HCT116 (cell line): ENCODE measurements at regions of chr17 and their contacts with region 1.

Region 1: GRCh38 chr17:27879987-27880608 is 13.1 kb downstream of the LYRM9 start:
- DNase-seq: no peak
- ATAC-seq: peak; percentile 99
- H3K4me3 ChIP-seq: no peak overlapping the region
- H3K27ac ChIP-seq: no peak overlapping the region
- H3K4me1 ChIP-seq: no peaks in the 10 kb centered on the region
- H3K27me3 ChIP-seq: no peaks in the 10 kb centered on the region
- CTCF ChIP-seq: peak; percentile 83 to 92 (median 85)
- POLR2A ChIP-seq: no peak
- RAD21 ChIP-seq: peak; percentile 88

Region 2: DNA sequence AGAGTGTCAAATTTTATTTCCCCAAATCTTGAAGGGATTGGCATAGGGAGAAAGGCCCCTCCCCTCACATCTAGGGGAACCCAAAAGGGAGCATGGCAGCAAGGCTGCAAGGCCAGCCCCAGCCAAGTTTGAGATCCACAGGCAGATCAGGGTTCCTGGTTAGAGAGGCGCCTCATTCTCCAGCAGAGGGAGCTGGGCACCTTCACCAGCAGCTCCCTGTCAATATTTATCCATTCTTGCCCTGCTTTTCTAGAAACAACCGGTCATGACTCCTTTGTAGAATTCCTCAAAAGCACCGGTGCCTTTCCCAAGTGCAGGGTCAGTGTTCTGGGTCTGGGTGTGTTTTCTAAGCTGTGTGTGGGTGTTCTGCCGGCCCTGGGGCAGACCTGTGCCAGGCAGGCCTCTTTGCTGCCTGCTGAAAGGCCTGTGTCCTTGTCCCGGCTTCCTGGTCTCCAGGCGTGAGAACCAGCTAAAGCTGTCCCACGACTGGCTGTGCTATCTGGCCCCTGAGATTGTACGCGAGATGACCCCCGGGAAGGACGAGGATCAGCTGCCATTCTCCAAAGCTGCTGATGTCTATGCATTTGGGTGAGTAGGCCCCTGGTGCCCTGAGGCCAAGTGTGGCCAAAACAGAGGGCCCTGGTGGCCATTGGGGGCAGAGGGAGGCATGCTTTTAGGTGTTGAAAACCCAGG is 270.3 kb before region 1 on chr17:
- CTCF ChIA-PET with region 1: no interaction called
- POLR2A ChIA-PET with region 1: no interaction called
- RAD21 ChIA-PET with region 1: no interaction called
- intact Hi-C with region 1: loop called (anchors 5 kb)
- DNase-seq: no peak
- ATAC-seq: peak; percentile 91
- H3K4me3 ChIP-seq: no peak overlapping the region
- H3K27ac ChIP-seq: no peak overlapping the region
- H3K4me1 ChIP-seq: no peaks in the 10 kb centered on the region
- H3K27me3 ChIP-seq: no peaks in the 10 kb centered on the region
- CTCF ChIP-seq: peak; percentile 53 to 61 (median 60); a peak in 5 of 6 replicates
- POLR2A ChIP-seq: no peak
- RAD21 ChIP-seq: peak; percentile 65

Region 3: GRCh38 chr17:27760069-27760885 is 119.8 kb before region 1 on chr17:
- CTCF ChIA-PET with region 1: interaction called, 108 read pairs
- POLR2A ChIA-PET with region 1: interaction called, 4 read pairs
- RAD21 ChIA-PET with region 1: interaction called, 11 to 19 read pairs
- intact Hi-C with region 1: loop called (anchors 1 kb)
- DNase-seq: peak; percentile 24
- ATAC-seq: peak; percentile 86
- H3K4me3 ChIP-seq: no peak overlapping the region
- H3K27ac ChIP-seq: no peak overlapping the region
- H3K4me1 ChIP-seq: no peaks in the 10 kb centered on the region
- H3K27me3 ChIP-seq: no peaks in the 10 kb centered on the region; the same call in none of the 2 replicates
- CTCF ChIP-seq: peak; percentile 92 to 94 (median 93)
- POLR2A ChIP-seq: no peak
- RAD21 ChIP-seq: peak; percentile 77

Region 4: GRCh38 chr17:27818401-27819105 is 61.5 kb before region 1 on chr17:
- CTCF ChIA-PET with region 1: no interaction called
- POLR2A ChIA-PET with region 1: no interaction called
- RAD21 ChIA-PET with region 1: no interaction called
- intact Hi-C with region 1: no loop called
- DNase-seq: no peak
- ATAC-seq: no peak
- H3K4me3 ChIP-seq: no peak overlapping the region
- H3K27ac ChIP-seq: no peak overlapping the region
- H3K4me1 ChIP-seq: peaks cover 0 to 5% of the 10 kb centered on the region in 2 experiments; a peak in 1 of 4 replicates
- H3K27me3 ChIP-seq: no peaks in the 10 kb centered on the region
- CTCF ChIP-seq: no peak
- POLR2A ChIP-seq: no peak
- RAD21 ChIP-seq: no peak

Region 5: GRCh38 chr17:27868576-27868975 is 11.5 kb before region 1 on chr17:
- CTCF ChIA-PET with region 1: no interaction called
- POLR2A ChIA-PET with region 1: no interaction called
- RAD21 ChIA-PET with region 1: no interaction called
- intact Hi-C with region 1: no loop called
- DNase-seq: no peak
- ATAC-seq: no peak
- H3K4me3 ChIP-seq: no peak overlapping the region
- H3K27ac ChIP-seq: no peak overlapping the region
- H3K4me1 ChIP-seq: no peaks in the 10 kb centered on the region
- H3K27me3 ChIP-seq: no peaks in the 10 kb centered on the region
- CTCF ChIP-seq: no peak
- POLR2A ChIP-seq: no peak
- RAD21 ChIP-seq: 0 out of 2 replicates have a peak, but pooled peaks have one; percentile 11

Region 6: DNA sequence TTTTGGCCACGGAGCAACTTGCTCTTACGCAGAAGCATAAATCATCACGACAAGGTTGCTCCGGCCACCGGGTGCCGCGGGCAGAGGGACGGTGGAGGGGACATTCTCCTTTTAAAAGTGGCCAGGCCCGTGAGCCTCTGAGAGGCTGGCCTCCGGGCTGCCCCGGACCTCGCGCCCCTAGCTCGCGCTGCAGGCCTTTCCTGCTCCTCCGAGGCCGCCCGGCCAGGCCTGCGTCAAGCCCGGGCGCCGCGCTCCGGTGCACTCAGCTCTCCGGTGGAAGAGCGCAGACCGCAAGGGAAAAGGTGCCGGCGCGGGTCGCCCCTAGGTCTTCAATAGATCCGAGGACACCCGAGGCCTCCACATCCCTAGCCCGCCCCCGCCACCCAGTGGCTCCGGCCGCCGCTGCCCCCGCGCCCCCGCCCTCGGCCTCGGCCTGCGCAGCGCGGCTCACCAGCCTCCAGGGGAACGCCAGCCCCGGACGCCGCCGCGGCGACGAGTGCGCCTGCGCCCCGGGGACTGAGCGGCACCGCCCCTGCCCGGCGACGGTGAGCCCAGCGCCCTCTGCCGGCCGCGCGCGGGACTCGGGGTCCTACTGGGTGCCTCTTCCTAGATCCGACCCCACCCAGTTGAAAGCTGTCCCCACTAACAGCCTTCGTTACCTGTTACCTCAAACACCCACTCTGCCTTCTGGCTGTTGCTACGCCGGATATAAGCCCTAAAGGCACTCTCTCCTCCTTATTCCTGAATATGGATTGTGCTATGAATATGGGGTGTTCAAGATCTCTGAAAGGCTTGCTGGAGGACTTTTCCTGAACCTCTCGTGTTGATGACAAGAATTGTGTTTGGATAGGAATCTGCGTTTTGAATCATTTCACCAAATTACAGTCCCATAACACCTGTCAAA is 13.0 kb after region 1 on chr17 and contains the start of gene LYRM9:
- CTCF ChIA-PET with region 1: interaction called, 57 read pairs
- POLR2A ChIA-PET with region 1: interaction called, 4 read pairs
- RAD21 ChIA-PET with region 1: no interaction called
- intact Hi-C with region 1: no loop called
- DNase-seq: peak; percentile 66
- ATAC-seq: peak; percentile 97
- H3K4me3 ChIP-seq: peak within 1 kb of the TSS; percentile 56 to 67
- H3K27ac ChIP-seq: peak within 1 kb of the TSS; percentile 39; the same call in 1 of the 2 replicates
- H3K4me1 ChIP-seq: peaks cover 25 to 28% of the 10 kb centered on the region in 2 experiments; a peak in 3 of 4 replicates
- H3K27me3 ChIP-seq: no peaks in the 10 kb centered on the region
- CTCF ChIP-seq: peak; percentile 22 to 81 (median 80); a peak in 4 of 6 replicates
- POLR2A ChIP-seq: no peak
- RAD21 ChIP-seq: peak; percentile 48
- total RNA-seq, gene LYRM9: 4.8 TPM